ENCODE measurements at regions of chr1 and their contacts with region 1.

Region 1: GRCh38 chr1:119531624-119532323 is 24.8 kb downstream of the HSD3B1 start:
- DNase-seq: no peak
- H3K4me3 ChIP-seq: no peak overlapping the region
- CTCF ChIP-seq: no peak
- POLR2A ChIP-seq: no peak

Region 2: DNA sequence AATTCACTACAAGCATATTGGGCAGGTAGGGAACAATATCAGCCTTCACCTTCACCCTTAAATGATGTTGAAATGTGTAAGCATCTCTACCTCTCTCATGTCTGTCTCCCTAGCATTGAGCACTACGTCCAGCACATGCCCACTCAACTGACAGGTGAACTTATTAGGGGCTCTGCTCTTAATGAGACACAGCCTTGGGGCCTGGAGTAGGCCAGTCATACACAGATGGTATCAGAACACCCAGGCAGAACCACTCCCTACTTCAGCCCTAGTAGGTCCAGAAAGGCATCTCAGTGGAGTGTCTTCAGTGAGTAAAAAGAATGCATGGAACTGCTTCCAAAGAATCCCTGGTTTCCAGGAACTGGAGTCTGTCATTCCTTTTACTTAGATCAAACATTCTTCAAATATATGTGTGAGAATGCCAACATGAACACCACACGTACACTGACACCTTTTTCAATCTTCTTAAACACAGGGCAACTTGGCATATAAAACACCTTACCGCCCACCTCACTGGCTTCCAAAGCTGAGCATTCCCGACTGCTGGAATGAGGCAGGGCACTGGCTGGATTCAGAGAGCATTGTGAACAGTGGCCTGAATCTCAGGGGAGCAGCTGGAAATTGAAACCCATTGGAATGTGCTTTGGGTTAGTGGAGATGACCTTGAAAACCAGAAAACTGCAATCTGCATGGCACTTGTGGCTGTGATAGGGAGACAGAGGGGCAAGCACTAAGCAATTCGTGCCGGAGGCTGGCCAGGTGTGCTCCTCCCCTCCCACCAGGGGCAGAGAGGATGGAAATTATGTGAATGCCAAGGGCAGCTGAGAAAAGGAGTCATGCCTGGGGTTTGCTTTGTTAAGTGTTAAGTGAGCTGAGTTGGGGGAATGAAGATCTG is 49.0 kb before region 1 on chr1:
- intact Hi-C with region 1: loop called (anchors 10 kb)
- DNase-seq: no peak
- H3K4me3 ChIP-seq: no peak overlapping the region
- CTCF ChIP-seq: no peak
- POLR2A ChIP-seq: no peak

Measured in lower leg skin (tissue), 4 donors.